ENCODE measurements at regions of chr12 and their contacts with region 1.

Region 1: GRCh38 chr12:22443379-22444316 is 100.7 kb downstream of the C2CD5 start:
- DNase-seq: peak; percentile 62
- ATAC-seq: peak; percentile 94

Region 2: DNA sequence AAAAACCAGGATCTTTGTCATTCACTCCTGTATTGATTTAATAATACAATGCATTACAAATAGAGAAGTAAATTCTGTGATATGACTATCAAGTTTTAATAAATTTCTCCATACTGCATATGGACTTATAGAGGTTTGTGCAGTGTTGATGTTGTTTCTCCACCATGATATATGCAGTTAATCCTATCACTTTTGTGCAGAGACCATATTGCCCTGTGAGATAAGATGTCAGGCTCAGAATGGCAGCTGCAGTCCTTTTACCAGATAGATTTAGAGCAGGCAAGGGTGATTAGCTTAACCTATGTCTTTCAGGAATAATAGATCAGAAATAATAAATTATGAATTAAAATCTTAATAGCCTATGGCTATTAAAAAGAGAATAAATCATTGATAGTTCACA is 630.5 kb before region 1 on chr12:
- intact Hi-C with region 1: no loop called
- DNase-seq: no peak
- ATAC-seq: no peak

Region 3: DNA sequence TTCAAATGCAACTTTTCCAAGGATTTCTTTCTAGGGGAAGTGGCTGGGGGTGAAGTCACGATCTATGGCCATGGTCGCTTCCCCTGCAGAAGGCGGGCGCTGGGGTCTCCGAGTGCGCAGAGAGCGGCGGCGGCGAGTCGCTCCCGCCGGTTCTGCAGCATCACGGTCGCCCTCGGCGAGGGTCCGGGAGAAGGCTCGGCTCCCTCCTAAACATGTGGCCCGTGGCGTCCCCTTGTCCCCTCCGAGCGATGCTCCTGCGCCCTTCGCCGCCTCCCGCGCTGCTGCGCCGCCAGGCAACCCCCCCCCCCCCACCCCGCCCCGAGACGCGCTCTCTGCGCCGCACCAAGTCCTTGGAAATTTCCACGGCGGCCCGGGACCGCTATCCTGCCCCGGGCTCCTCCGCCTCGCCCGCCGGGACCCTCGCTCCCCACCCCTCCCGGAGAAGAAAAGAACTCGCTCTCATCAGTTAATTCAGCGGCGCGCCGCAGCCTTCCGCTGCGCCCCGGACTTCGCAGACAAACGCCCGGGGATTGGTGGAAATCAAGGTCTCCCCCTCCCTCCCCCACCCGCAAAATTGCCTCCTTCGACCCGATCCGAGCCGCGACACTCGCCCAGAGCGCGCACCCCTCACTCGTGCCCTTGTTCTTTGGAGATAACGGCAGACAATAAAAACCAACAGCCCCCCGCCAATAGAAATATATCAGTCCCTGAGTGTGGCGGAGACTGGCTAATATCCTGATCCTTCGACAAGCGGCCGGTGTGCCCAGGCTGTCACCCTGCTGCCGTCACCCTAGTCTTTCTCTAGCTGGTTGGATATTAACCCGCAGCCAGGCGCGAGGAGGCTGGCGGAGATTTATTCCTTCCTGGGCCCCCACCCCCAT is 109.0 kb before region 1 on chr12 and contains the start of gene ST8SIA1:
- intact Hi-C with region 1: loop called (anchors 5 kb)
- DNase-seq: peak; percentile 78
- ATAC-seq: peak; percentile 67
- total RNA-seq, gene ST8SIA1: 3.6 TPM

Region 4: DNA sequence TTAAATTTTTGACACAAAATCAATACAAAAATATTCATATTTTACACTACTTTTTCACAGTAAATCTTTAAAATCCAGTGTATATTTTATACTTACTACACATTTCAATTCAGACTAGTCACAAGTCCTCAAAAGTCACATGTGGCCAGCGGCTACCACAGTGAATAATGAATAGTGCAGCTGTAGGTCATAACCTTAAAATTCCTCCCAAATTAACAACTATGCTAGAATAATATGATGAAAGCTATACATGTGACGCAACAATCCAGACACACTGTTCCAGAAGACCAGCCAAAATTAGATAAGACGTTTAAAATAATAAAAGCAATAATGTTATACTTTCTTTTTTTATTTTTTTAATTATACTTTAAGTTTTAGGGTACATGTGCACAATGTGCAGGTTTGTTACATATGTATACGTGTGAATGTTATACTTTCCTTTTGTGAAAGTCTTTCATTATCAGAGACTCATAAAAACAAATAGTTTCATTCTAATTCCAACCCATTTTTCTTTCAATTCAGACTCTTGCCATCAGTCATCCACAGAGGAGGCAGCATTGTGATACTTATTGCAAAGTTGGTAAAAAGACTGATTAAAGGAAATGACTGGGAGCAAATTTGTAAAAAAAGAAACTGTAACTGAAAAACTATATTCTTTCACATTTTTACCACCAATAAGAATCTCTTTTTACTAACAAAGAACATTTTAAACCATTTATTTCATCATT is 33.7 kb after region 1 on chr12:
- intact Hi-C with region 1: no loop called
- DNase-seq: no peak
- ATAC-seq: no peak